ENCODE measurements at regions of chr11 and their contacts with region 1.

Region 1: DNA sequence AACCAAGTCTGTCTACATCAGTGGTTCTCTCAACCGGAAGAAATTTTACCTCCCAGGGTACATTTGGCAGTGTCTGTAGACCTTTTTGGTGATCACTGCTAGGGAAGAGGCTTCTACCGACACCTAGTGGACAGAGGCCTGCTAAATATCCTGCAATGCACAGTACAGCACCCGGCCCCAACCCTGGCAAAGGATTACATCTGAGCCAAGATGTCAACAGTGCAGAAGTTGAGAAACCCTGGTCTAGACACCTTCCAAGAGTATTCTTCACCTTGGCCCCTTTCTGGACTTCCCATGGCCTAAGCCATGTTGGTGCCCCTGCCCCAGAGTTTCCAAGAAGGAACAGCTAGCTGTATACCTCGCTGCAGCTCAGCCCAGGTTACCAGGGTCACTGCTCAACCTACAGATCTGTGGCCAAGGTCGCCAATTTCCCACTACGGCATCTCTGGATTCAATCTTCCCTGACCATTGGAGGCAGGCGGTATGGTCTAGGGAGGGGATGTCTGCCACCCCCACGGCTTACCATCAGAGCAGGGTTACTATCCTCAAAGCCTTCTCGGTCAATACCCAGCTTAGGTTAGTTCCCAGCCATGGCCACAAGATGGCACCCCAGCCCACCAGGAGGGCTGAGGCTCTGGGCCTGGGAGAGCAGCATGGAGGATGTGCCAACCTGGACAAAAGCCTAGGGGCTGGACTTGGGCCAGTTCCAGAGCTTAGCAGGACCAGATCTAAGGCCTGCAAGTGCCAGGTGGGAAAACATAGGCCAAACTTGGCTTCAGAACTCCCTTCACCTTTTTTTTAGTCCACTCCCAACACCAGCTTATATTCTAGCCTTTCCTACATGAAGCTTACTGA is 3.7 kb upstream of the KCNC1 start:
- DNase-seq: peak; percentile 92
- H3K4me3 ChIP-seq: no peak overlapping the region
- H3K27ac ChIP-seq: no peak overlapping the region
- H3K4me1 ChIP-seq: no peaks in the 10 kb centered on the region
- H3K27me3 ChIP-seq: no peaks in the 10 kb centered on the region
- CTCF ChIP-seq: peak; percentile 65 to 95 (median 88)
- POLR2A ChIP-seq: no peak

Region 2: DNA sequence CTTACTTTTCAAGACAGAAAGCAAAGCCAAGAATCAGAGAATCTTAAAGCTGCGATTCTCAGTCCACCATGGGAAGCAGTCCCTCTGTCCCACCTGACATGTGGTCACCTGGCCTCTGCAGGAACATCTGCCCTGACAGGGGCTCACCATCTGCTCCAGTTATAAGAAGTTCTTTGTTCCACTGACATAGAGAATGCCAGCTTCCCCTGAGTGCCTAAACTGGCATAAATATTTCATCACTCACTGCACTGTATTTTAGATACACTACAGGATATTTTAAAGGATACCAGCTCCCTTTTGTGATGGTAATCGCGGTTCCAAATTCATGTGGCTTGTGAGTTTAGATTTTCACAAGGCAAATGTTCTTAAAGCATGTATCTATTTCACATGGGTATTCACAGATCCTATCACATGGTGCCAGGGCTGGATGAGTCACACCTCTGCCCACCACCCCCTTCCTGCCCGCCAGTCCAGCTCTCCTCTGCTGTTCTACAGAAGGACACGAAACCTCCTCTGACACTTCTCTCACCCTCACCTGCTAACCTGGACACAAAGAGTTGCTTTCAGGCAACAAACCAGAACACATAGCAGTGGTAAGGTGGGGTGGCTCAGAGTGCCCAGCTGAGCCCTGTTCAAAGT is 109.3 kb after region 1 on chr11:
- intact Hi-C with region 1: loop called (anchors 10 kb)
- DNase-seq: no peak
- H3K4me3 ChIP-seq: no peak overlapping the region
- H3K27ac ChIP-seq: no peak overlapping the region
- H3K4me1 ChIP-seq: no peaks in the 10 kb centered on the region
- H3K27me3 ChIP-seq: no peaks in the 10 kb centered on the region
- CTCF ChIP-seq: no peak
- POLR2A ChIP-seq: no peak

Region 3: DNA sequence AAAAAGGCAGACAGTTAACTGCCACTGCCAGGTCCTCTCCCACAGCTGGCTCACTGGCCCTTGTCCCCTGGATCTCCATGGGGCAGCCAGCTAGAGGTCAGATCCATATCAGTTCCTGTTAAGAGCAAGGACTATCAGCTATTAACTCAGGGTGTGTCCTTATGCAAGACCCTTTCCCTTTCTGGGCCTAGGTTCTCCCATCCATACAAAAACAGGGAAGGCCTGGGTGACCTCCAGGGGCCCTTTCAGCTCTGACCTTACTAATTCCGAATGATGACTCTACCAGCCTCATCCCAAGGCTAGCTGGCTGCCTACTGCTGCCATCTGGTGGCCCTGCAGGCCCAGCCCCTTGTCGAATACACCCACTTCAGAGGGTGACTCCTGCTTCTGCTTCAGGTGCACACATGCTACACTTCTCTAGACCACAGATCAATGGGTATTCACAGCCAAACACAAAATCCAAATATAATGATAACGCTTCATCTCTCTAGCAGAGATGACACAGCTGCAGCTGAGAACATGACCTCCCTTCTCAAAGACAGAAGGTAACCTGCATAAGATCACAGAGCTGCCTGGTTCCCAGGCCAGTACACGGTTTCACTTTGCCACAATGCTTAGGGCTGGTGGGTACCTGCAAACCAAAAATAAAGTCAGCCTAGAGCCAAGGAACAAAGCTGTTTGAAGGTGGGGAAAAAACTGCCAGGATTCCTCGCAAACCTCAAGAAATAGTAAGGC is 247.9 kb after region 1 on chr11:
- intact Hi-C with region 1: loop called (anchors 2 kb)
- DNase-seq: peak; percentile 11
- H3K4me3 ChIP-seq: no peak overlapping the region
- H3K27ac ChIP-seq: no peak overlapping the region
- H3K4me1 ChIP-seq: no peaks in the 10 kb centered on the region
- H3K27me3 ChIP-seq: no peaks in the 10 kb centered on the region
- CTCF ChIP-seq: peak; percentile 24 to 62 (median 56)
- POLR2A ChIP-seq: no peak

Measured in prostate gland (tissue), 2 donors.